Dendritic cell treated with granulocyte-macrophage colony-stimulating factor and Interleukin-4, amounts not matched to agents 40 ng/mL and 50 ng/mL, for 4 days (primary cell): ENCODE measurements at regions of chr4 and their contacts with region 1.

Region 1: GRCh38 chr4:168784786-168785461 is 225.1 kb downstream of the CBR4 start:
- H3K4me3 Mint-ChIP-seq: no peak overlapping the region
- H3K27ac Mint-ChIP-seq: no peak overlapping the region
- H3K4me1 Mint-ChIP-seq: peaks cover 18% of the 10 kb centered on the region
- H3K27me3 Mint-ChIP-seq: peaks cover 17% of the 10 kb centered on the region

Region 2: GRCh38 chr4:168737809-168738176 is 47.1 kb before region 1 on chr4:
- intact Hi-C with region 1: loop called (anchors 5 kb)
- H3K4me3 Mint-ChIP-seq: no peak overlapping the region
- H3K27ac Mint-ChIP-seq: no peak overlapping the region
- H3K4me1 Mint-ChIP-seq: peaks cover 45% of the 10 kb centered on the region
- H3K27me3 Mint-ChIP-seq: peaks cover 8% of the 10 kb centered on the region